ENCODE measurements at regions of chr19 and their contacts with region 1.

Region 1: GRCh38 chr19:58543826-58544590 is at the start of gene TRIM28:
- DNase-seq: peak; percentile 98
- H3K4me3 ChIP-seq: peak within 1 kb of the TSS; percentile 74 to 91
- H3K27ac ChIP-seq: peak within 1 kb of the TSS; percentile 97
- H3K4me1 ChIP-seq: peaks cover 17% of the 10 kb centered on the region
- H3K27me3 ChIP-seq: no peaks in the 10 kb centered on the region
- CTCF ChIP-seq: peak in 1 of 4 experiments; percentile 1
- POLR2A ChIP-seq: peak; percentile 97
- total RNA-seq, gene TRIM28: 237 to 374 TPM

Region 2: GRCh38 chr19:58009666-58010371 is 534.2 kb before region 1 on chr19:
- intact Hi-C with region 1: no loop called
- DNase-seq: peak; percentile 90
- H3K4me3 ChIP-seq: peak overlapping the region; percentile 11 to 36
- H3K27ac ChIP-seq: peak overlapping the region; percentile 36 to 77
- H3K4me1 ChIP-seq: no peaks in the 10 kb centered on the region
- H3K27me3 ChIP-seq: no peaks in the 10 kb centered on the region
- CTCF ChIP-seq: peak in 1 of 4 experiments; percentile 8
- POLR2A ChIP-seq: peak; percentile 27

Region 3: GRCh38 chr19:58519355-58520256 is 24.4 kb before region 1 on chr19 and contains the start of gene ZBTB45:
- intact Hi-C with region 1: loop called (anchors 1 kb)
- DNase-seq: peak; percentile 89
- H3K4me3 ChIP-seq: peak within 1 kb of the TSS; percentile 82
- H3K27ac ChIP-seq: peak within 1 kb of the TSS; percentile 94 to 97
- H3K4me1 ChIP-seq: peaks cover 10% of the 10 kb centered on the region
- H3K27me3 ChIP-seq: no peaks in the 10 kb centered on the region
- CTCF ChIP-seq: peak; percentile 71 to 92 (median 82)
- POLR2A ChIP-seq: peak; percentile 44
- total RNA-seq, gene ZBTB45: 22.0 to 24.0 TPM

Measured in prostate gland (tissue), 2 donors.